H1 (cell line): ENCODE measurements at regions of chr19 and their contacts with region 1.

Region 1: DNA sequence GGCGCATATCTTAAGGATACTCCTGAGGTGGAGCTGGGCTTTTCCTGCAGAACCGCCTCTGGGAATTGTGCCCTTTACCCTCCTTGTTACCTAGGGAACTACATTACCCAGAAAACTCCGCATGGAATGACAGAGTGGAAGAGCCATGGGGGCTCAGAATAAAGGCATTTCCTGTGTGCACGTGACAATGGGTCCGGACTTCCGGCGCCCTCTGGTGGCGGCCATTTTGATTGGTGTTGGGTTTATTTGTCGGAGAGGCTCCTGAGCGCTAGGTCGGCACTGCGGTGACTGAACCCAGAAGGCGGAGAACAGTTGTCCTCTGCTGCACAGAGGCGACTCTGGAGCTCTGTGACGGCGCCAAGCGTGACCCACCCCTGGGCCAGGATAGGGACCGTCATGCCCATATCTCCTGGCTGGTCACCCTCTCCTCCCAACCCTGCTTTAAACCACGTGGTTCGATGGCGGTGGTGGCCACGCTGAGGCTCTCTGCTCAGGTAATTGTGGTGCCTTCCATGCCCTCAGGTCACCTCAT is at the start of gene ZNF587B:
- DNase-seq: peak; percentile 77 to 92
- H3K4me3 ChIP-seq: peak within 1 kb of the TSS; percentile 73 to 99 (median 94)
- H3K27ac ChIP-seq: peak within 1 kb of the TSS; percentile 96
- H3K4me1 ChIP-seq: peaks cover 0 to 8% (median 5%) of the 10 kb centered on the region in 4 experiments; a peak in 4 of 7 replicates
- H3K27me3 ChIP-seq: no peaks in the 10 kb centered on the region
- CTCF ChIP-seq: peak in 2 of 3 experiments; percentile 8 to 16; a peak in 2 of 4 replicates
- EP300 ChIP-seq: no peak
- POLR2A ChIP-seq: peak; percentile 68 to 95
- RAD21 ChIP-seq: peak in 1 of 2 experiments; percentile 19; a peak in 2 of 4 replicates
- total RNA-seq, gene ZNF587B: 53.7 and 60.1 TPM in 2 replicates

Region 2: GRCh38 chr19:57789288-57789687 is 40.8 kb before region 1 on chr19:
- CTCF ChIA-PET with region 1: no interaction called
- POLR2A ChIA-PET with region 1: no interaction called
- DNase-seq: no peak
- H3K4me3 ChIP-seq: no peak overlapping the region
- H3K27ac ChIP-seq: no peak overlapping the region
- H3K4me1 ChIP-seq: peaks cover 0 to 2% (median 0%) of the 10 kb centered on the region in 4 experiments; a peak in 1 of 7 replicates
- H3K27me3 ChIP-seq: no peaks in the 10 kb centered on the region
- CTCF ChIP-seq: no peak
- EP300 ChIP-seq: no peak
- POLR2A ChIP-seq: no peak
- RAD21 ChIP-seq: no peak

Region 3: GRCh38 chr19:57819475-57820148 is 10.5 kb before region 1 on chr19:
- CTCF ChIA-PET with region 1: interaction called, 15 read pairs
- POLR2A ChIA-PET with region 1: interaction called, 52 read pairs
- DNase-seq: peak; percentile 63 to 73
- H3K4me3 ChIP-seq: peak overlapping the region; percentile 84 to 99 (median 96)
- H3K27ac ChIP-seq: peak overlapping the region; percentile 80
- H3K4me1 ChIP-seq: peaks cover 3 to 7% (median 5%) of the 10 kb centered on the region in 4 experiments
- H3K27me3 ChIP-seq: no peaks in the 10 kb centered on the region
- CTCF ChIP-seq: 0 out of 4 replicates have a peak, but pooled peaks of 1 of the 3 experiments have one; percentile 1
- EP300 ChIP-seq: no peak
- POLR2A ChIP-seq: peak; percentile 67 to 85
- RAD21 ChIP-seq: no peak

Region 4: GRCh38 chr19:57841122-57841763 is 11.1 kb after region 1 on chr19:
- CTCF ChIA-PET with region 1: interaction called, 5 read pairs
- POLR2A ChIA-PET with region 1: interaction called, 16 read pairs
- DNase-seq: no peak
- H3K4me3 ChIP-seq: no peak overlapping the region
- H3K27ac ChIP-seq: no peak overlapping the region
- H3K4me1 ChIP-seq: no peaks in the 10 kb centered on the region
- H3K27me3 ChIP-seq: no peaks in the 10 kb centered on the region
- CTCF ChIP-seq: no peak
- EP300 ChIP-seq: no peak
- POLR2A ChIP-seq: no peak
- RAD21 ChIP-seq: no peak

Region 5: GRCh38 chr19:57850553-57851017 is 20.4 kb after region 1 on chr19:
- CTCF ChIA-PET with region 1: interaction called, 6 read pairs
- POLR2A ChIA-PET with region 1: interaction called, 33 read pairs
- DNase-seq: peak in 1 of 2 experiments; percentile 49
- H3K4me3 ChIP-seq: peak overlapping the region; percentile 79 to 81 (median 79)
- H3K27ac ChIP-seq: peak overlapping the region; percentile 83
- H3K4me1 ChIP-seq: peaks cover 0 to 6% (median 4%) of the 10 kb centered on the region in 4 experiments; a peak in 6 of 7 replicates
- H3K27me3 ChIP-seq: no peaks in the 10 kb centered on the region
- CTCF ChIP-seq: no peak
- EP300 ChIP-seq: no peak
- POLR2A ChIP-seq: peak in 1 of 2 experiments; percentile 13; a peak in 1 of 3 replicates
- RAD21 ChIP-seq: no peak